Activated CD4-positive, alpha-beta memory T cell treated with anti-CD3 and anti-CD28 coated beads for 36 hours (primary cell): ENCODE measurements at regions of chrX and their contacts with region 1.

Region 1: DNA sequence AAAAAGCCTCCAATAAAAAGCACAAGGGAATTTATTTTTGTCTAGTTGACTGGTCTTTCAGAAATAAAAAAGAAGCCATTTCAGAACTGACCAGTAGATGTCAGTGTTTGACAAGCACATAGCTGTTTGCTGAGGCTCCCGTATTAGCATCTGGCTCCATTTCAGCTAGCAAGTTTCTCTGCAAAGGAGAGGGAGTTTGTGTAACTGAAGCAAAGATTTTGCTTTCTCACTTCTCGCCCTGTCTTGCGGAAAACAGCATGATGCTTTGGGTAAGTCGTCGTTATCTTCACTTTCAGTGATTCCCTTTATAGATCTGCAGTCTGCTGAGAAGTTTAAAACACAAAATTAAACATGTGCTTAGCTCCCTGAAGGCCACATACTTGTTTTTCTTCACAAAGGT is 85.5 kb downstream of the CT47B1 start:
- DNase-seq: peak; percentile 16
- H3K4me3 Mint-ChIP-seq: peak overlapping the region; percentile 39
- H3K27ac Mint-ChIP-seq: peak overlapping the region; percentile 89
- H3K4me1 Mint-ChIP-seq: peaks cover 18% of the 10 kb centered on the region
- H3K27me3 Mint-ChIP-seq: no peaks in the 10 kb centered on the region

Region 2: GRCh38 chrX:120536061-120536460 is 254.1 kb before region 1 on chrX:
- CTCF ChIA-PET with region 1: no interaction called
- POLR2A ChIA-PET with region 1: no interaction called
- intact Hi-C with region 1: no loop called
- DNase-seq: no peak
- H3K4me3 Mint-ChIP-seq: no peak overlapping the region
- H3K27ac Mint-ChIP-seq: no peak overlapping the region
- H3K4me1 Mint-ChIP-seq: peaks cover 2% of the 10 kb centered on the region
- H3K27me3 Mint-ChIP-seq: no peaks in the 10 kb centered on the region

Region 3: DNA sequence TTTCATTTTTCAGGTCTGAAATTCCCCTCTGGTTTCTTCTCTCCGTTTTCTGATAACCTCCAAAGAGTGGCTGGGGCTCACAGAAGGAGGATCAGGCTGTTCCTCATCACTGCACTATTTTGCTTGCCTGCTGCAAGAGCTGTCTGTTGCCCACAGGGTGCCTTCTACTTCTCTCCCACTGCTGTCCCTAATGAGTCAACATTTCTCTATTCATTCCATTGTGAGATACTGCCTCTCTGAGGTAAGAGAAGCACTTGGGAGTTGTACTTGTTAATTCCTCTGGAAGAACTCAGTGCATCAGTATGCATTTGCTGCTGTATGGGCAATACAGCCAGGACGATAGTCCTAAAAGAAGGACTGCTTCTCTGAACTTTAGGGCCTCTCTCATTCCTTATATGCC is 50.7 kb after region 1 on chrX:
- CTCF ChIA-PET with region 1: no interaction called
- POLR2A ChIA-PET with region 1: no interaction called
- intact Hi-C with region 1: loop called (anchors 5 kb)
- DNase-seq: no peak
- H3K4me3 Mint-ChIP-seq: no peak overlapping the region
- H3K27ac Mint-ChIP-seq: no peak overlapping the region
- H3K4me1 Mint-ChIP-seq: no peaks in the 10 kb centered on the region
- H3K27me3 Mint-ChIP-seq: no peaks in the 10 kb centered on the region

Region 4: DNA sequence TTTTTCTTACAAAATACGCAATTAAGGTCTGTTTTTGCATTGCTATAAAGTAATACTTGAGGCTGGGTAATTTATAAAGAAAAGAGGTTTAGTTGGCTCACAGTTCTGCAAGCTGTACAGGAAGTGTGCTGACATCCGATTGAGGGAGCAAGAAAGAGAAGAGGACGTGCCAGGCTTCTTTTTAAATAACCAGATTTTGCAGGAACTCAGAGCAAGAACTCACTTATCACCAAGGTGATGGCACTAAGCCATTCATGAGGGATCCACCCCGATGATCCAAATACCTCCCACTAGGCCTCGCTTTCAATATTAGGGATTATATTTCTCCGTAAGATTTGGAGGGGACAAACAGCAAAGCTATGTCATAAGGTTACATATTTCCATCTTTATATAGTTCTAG is 714.0 kb after region 1 on chrX:
- CTCF ChIA-PET with region 1: no interaction called
- POLR2A ChIA-PET with region 1: no interaction called
- intact Hi-C with region 1: loop called (anchors 10 kb)
- DNase-seq: no peak
- H3K4me3 Mint-ChIP-seq: no peak overlapping the region
- H3K27ac Mint-ChIP-seq: no peak overlapping the region
- H3K4me1 Mint-ChIP-seq: no peaks in the 10 kb centered on the region
- H3K27me3 Mint-ChIP-seq: no peaks in the 10 kb centered on the region

Region 5: GRCh38 chrX:121579016-121579760 is 789.1 kb after region 1 on chrX:
- CTCF ChIA-PET with region 1: interaction called, 5 read pairs
- POLR2A ChIA-PET with region 1: no interaction called
- intact Hi-C with region 1: loop called (anchors 1 kb)
- DNase-seq: peak; percentile 13
- H3K4me3 Mint-ChIP-seq: no peak overlapping the region
- H3K27ac Mint-ChIP-seq: no peak overlapping the region
- H3K4me1 Mint-ChIP-seq: peaks cover 8% of the 10 kb centered on the region
- H3K27me3 Mint-ChIP-seq: no peaks in the 10 kb centered on the region